ENCODE measurements at regions of chr2 and their contacts with region 1.

Region 1: GRCh38 chr2:19746611-19747309 is 155.0 kb downstream of the TTC32 start:
- DNase-seq: peak in 1 of 2 experiments; percentile 56
- H3K4me3 ChIP-seq: no peak overlapping the region
- H3K4me3 Mint-ChIP-seq: no peak overlapping the region
- H3K27ac Mint-ChIP-seq: no peak overlapping the region
- H3K4me1 ChIP-seq: no peaks in the 10 kb centered on the region
- H3K4me1 Mint-ChIP-seq: no peaks in the 10 kb centered on the region
- H3K27me3 ChIP-seq: no peaks in the 10 kb centered on the region
- H3K27me3 Mint-ChIP-seq: peaks cover 4% of the 10 kb centered on the region
- CTCF ChIP-seq: peak; percentile 40 to 55

Region 2: GRCh38 chr2:19369341-19369955 is 377.3 kb before region 1 on chr2:
- CTCF ChIA-PET with region 1: interaction called, 5 read pairs
- POLR2A ChIA-PET with region 1: no interaction called
- intact Hi-C with region 1: loop called (anchors 5 kb)
- DNase-seq: no peak
- H3K4me3 ChIP-seq: no peak overlapping the region
- H3K4me3 Mint-ChIP-seq: no peak overlapping the region
- H3K27ac Mint-ChIP-seq: no peak overlapping the region
- H3K4me1 ChIP-seq: no peaks in the 10 kb centered on the region
- H3K4me1 Mint-ChIP-seq: no peaks in the 10 kb centered on the region
- H3K27me3 ChIP-seq: no peaks in the 10 kb centered on the region
- H3K27me3 Mint-ChIP-seq: peaks cover 21% of the 10 kb centered on the region
- CTCF ChIP-seq: peak in 1 of 2 experiments; percentile 12

Region 3: DNA sequence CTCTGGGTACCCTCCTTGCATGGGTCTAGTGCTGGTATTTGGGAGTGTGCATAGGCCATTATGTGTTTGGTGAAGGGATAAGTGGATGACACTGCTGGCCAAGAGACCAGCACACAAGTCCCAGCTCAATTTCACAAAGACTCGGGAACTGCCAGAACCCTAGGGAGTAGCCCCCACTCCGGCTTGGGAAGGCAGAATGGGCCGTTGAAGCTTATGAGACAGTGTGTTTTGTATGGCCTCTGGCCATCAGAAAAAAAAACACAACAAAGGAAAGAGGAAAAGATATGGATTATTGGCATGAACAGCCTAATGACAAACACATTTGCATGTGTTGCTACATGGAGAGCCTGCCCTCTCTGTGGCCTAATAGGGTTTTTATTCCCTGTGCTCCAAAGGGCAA is 10.8 kb after region 1 on chr2:
- CTCF ChIA-PET with region 1: no interaction called
- POLR2A ChIA-PET with region 1: no interaction called
- intact Hi-C with region 1: no loop called
- DNase-seq: no peak
- H3K4me3 ChIP-seq: no peak overlapping the region
- H3K4me3 Mint-ChIP-seq: no peak overlapping the region
- H3K27ac Mint-ChIP-seq: no peak overlapping the region
- H3K4me1 ChIP-seq: no peaks in the 10 kb centered on the region
- H3K4me1 Mint-ChIP-seq: peaks cover 5% of the 10 kb centered on the region
- H3K27me3 ChIP-seq: no peaks in the 10 kb centered on the region
- H3K27me3 Mint-ChIP-seq: peaks cover 5% of the 10 kb centered on the region
- CTCF ChIP-seq: no peak

Region 4: GRCh38 chr2:19769513-19769912 is 22.8 kb after region 1 on chr2:
- CTCF ChIA-PET with region 1: no interaction called
- POLR2A ChIA-PET with region 1: no interaction called
- intact Hi-C with region 1: no loop called
- DNase-seq: no peak
- H3K4me3 ChIP-seq: no peak overlapping the region
- H3K4me3 Mint-ChIP-seq: no peak overlapping the region
- H3K27ac Mint-ChIP-seq: no peak overlapping the region
- H3K4me1 ChIP-seq: peaks cover 4% of the 10 kb centered on the region; the same call in 1 of the 2 replicates
- H3K4me1 Mint-ChIP-seq: peaks cover 7% of the 10 kb centered on the region
- H3K27me3 ChIP-seq: no peaks in the 10 kb centered on the region
- H3K27me3 Mint-ChIP-seq: peaks cover 6% of the 10 kb centered on the region
- CTCF ChIP-seq: peak; percentile 28 to 37

Measured in Caco-2 (cell line).